ENCODE measurements at regions of chr12 and their contacts with region 1.

Region 1: GRCh38 chr12:4526923-4527546 is 11.7 kb upstream of the RAD51AP1 start:
- DNase-seq: no peak
- ATAC-seq: no peak
- H3K4me3 ChIP-seq: no peak overlapping the region
- H3K27ac ChIP-seq: no peak overlapping the region
- H3K4me1 ChIP-seq: peaks cover 0 to 8% of the 10 kb centered on the region in 2 donors
- H3K27me3 ChIP-seq: no peaks in the 10 kb centered on the region
- CTCF ChIP-seq: peak in 4 of 5 experiments; percentile 41 to 65 (median 52)
- POLR2A ChIP-seq: no peak

Region 2: DNA sequence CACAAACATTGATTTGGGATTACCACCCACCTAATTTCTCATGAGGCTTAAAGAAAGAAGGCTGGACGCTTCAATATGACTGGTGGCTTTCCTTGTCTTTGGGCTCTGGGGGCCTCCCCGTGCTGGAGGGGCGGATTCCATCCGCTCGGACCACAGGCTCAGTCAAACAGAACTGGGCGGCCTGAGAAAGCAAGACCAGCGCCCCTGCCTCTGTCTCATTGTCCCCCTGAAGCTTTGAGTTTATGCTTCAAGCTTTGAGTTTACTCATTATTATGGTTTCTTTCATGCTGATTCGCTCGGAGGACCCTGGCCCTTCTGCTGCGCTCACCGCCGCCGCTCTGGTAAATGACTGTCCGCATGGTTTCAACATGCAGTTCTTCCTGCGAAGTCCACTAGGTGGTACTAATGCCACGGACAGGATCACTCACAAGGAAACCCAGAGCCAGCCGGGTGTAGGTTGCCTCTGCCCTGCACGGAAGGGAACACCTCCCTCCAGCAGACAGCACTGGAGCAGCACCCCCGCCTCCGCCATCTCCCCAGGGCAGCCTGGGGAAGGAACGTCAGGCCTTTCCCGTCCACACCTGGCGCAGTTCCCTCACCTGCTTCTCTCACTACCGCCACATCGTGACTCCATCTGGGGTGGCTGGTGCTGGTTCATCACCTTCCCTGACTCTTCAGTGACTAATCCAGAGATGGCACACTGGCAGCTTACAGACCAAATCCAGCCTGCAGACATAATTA is 219.3 kb before region 1 on chr12:
- in situ Hi-C with region 1: loop called (anchors 10 to 25 kb)
- intact Hi-C with region 1: loop called (anchors 5 kb)
- DNase-seq: peak; percentile 38 to 62
- ATAC-seq: peak; percentile 95 to 98
- H3K4me3 ChIP-seq: peak overlapping the region in 2 of 4 donors; percentile 24 to 35
- H3K27ac ChIP-seq: no peak overlapping the region
- H3K4me1 ChIP-seq: peaks cover 0 to 9% of the 10 kb centered on the region in 2 donors
- H3K27me3 ChIP-seq: no peaks in the 10 kb centered on the region
- CTCF ChIP-seq: peak; percentile 44 to 84 (median 63)
- POLR2A ChIP-seq: no peak

Region 3: DNA sequence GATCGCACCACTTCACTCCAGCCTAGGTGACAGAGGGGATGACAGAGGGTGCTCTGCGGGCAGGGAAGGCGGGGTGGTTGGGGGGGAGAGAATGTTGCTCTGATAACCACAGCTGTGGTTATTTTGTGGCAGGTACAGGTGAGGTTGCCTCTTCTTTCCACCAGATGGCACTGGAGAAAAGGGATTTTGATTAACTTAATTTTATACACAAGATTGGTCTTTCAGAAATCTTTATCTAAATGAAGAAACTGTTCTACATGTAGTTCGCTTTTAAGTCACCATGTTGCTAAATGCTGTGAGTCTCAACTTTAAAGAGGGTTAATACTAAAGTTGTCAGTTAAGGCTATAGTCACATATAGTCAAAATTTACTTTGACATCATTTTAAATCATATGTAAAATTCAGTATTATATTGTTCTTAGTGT is 173.2 kb before region 1 on chr12:
- in situ Hi-C with region 1: no loop called
- intact Hi-C with region 1: loop called (anchors 5 kb)
- DNase-seq: no peak
- ATAC-seq: no peak
- H3K4me3 ChIP-seq: no peak overlapping the region
- H3K27ac ChIP-seq: no peak overlapping the region
- H3K4me1 ChIP-seq: no peaks in the 10 kb centered on the region
- H3K27me3 ChIP-seq: no peaks in the 10 kb centered on the region
- CTCF ChIP-seq: peak in 4 of 5 experiments; percentile 25 to 51 (median 26)
- POLR2A ChIP-seq: no peak

Region 4: DNA sequence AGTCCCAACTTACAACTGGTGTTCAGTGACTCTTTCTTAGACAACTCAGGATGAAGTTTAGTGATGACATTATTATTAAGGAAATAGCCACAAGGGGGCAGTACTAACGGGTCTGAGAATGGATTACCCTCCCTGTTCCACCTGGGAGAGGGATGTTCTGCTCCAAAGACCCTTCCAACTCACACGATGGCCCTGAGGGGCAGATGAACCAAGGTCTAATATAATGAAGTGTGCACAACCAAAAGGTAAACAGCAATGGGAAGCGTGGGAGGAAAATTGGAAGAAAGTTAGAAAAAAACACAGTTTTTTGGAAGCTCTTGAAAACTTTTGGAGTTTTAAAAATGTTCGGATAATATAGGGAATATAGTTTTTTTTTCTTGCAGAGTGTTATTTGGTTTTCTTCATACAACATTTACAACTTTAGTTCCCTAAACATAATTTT is 105.4 kb before region 1 on chr12:
- in situ Hi-C with region 1: loop called in 1 of 4 experiments (anchors 10 kb)
- intact Hi-C with region 1: loop called (anchors 1 kb)
- DNase-seq: no peak
- ATAC-seq: peak; percentile 72 to 75
- H3K4me3 ChIP-seq: no peak overlapping the region
- H3K27ac ChIP-seq: no peak overlapping the region
- H3K4me1 ChIP-seq: no peaks in the 10 kb centered on the region
- H3K27me3 ChIP-seq: peaks cover 11 to 18% (median 18%) of the 10 kb centered on the region in 3 donors
- CTCF ChIP-seq: peak; percentile 38 to 72 (median 60)
- POLR2A ChIP-seq: no peak

Region 5: GRCh38 chr12:4434706-4435425 is 92.2 kb before region 1 on chr12:
- in situ Hi-C with region 1: loop called in 2 of 4 experiments (anchors 5 to 10 kb)
- intact Hi-C with region 1: no loop called
- DNase-seq: no peak
- ATAC-seq: no peak
- H3K4me3 ChIP-seq: no peak overlapping the region
- H3K27ac ChIP-seq: peak overlapping the region; percentile 77 to 88 (median 81)
- H3K4me1 ChIP-seq: peaks cover 31 to 38% of the 10 kb centered on the region in 2 donors
- H3K27me3 ChIP-seq: no peaks in the 10 kb centered on the region
- CTCF ChIP-seq: no peak
- POLR2A ChIP-seq: no peak

Region 6: GRCh38 chr12:4441355-4442335 is 85.4 kb before region 1 on chr12:
- in situ Hi-C with region 1: loop called in 1 of 4 experiments (anchors 10 kb)
- intact Hi-C with region 1: no loop called
- DNase-seq: peak in 1 of 2 donors; percentile 33
- ATAC-seq: peak in 1 of 2 donors; percentile 34
- H3K4me3 ChIP-seq: peak overlapping the region in 1 of 4 donors; percentile 2
- H3K27ac ChIP-seq: peak overlapping the region; percentile 33 to 88 (median 66)
- H3K4me1 ChIP-seq: peaks cover 8 to 53% of the 10 kb centered on the region in 2 donors
- H3K27me3 ChIP-seq: no peaks in the 10 kb centered on the region
- CTCF ChIP-seq: no peak
- POLR2A ChIP-seq: no peak

Measured in gastrocnemius medialis (tissue), 4 donors.